ENCODE measurements at regions of chr12 and their contacts with region 1.

Region 1: GRCh38 chr12:54526812-54527630 is 22.4 kb upstream of the PDE1B start:
- DNase-seq: peak; percentile 78 to 93
- H3K4me3 ChIP-seq: no peak overlapping the region
- H3K27ac ChIP-seq: no peak overlapping the region
- H3K4me1 ChIP-seq: peaks cover 0 to 16% (median 5%) of the 10 kb centered on the region in 4 experiments; a peak in 4 of 7 replicates
- H3K27me3 ChIP-seq: peaks cover 0 to 2% (median 2%) of the 10 kb centered on the region in 4 experiments; a peak in 4 of 7 replicates
- CTCF ChIP-seq: peak; percentile 61 to 95 (median 94)
- EP300 ChIP-seq: no peak
- POLR2A ChIP-seq: no peak
- RAD21 ChIP-seq: peak; percentile 98 to 99

Region 2: DNA sequence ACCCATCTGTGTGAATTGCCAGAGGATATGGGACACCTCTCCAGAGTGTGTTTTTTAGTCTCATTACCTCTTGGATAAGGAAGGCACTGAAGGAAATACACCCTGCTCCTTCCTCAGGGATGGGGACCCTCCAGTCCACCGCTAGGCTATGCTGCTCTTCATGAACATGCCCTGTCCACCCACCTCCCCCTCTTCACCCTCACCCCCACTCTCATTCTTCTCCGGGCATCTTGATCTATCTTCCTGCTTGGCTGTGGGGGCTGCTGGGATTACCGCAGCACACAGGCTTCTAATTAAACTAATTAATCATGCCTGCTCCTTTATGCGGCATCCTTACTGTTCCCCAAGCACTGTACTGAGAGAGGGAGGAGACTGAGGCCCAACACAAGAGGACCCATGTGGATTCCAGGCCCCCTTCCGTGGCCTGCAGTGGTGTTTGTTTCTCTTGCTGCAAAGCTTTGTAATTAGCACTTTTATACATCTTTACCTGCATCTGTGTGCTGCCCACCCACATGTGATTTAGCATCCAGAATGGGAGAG is 14.8 kb after region 1 on chr12:
- CTCF ChIA-PET with region 1: interaction called, 76 read pairs
- POLR2A ChIA-PET with region 1: interaction called, 3 read pairs
- DNase-seq: no peak
- H3K4me3 ChIP-seq: no peak overlapping the region
- H3K27ac ChIP-seq: no peak overlapping the region
- H3K4me1 ChIP-seq: peaks cover 0 to 9% (median 3%) of the 10 kb centered on the region in 4 experiments; a peak in 4 of 7 replicates
- H3K27me3 ChIP-seq: peaks cover 0 to 7% (median 3%) of the 10 kb centered on the region in 4 experiments; a peak in 4 of 7 replicates
- CTCF ChIP-seq: no peak
- EP300 ChIP-seq: no peak
- POLR2A ChIP-seq: no peak
- RAD21 ChIP-seq: no peak

Region 3: DNA sequence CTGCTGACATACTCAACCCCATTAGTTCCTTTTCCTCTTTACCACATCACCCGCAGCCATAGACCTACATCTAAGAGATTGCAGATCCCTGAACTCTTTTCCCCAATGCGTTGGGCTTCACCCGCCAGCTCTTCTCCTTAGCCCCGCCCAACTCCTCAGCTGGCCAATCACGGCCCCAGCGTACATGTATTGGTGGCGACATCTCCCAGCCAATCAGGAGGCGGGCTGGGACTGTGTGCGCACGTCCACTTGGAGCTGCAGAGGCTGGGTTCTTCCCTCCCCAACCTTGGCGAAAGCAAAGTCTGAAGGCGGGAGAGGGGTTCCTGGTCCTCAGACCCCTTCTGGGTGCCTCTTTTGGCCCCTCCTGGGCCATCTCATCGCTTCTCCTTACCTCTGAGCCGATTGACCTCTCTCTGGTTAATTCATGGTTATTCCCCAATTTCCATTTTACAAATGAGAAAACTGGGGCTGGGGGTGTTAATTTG is 33.4 kb after region 1 on chr12:
- CTCF ChIA-PET with region 1: interaction called, 53 read pairs
- POLR2A ChIA-PET with region 1: no interaction called
- DNase-seq: peak; percentile 61 to 88
- H3K4me3 ChIP-seq: peak overlapping the region; percentile 19 to 57 (median 26); a peak in 7 of 8 replicates
- H3K27ac ChIP-seq: no peak overlapping the region
- H3K4me1 ChIP-seq: peaks cover 0 to 7% (median 5%) of the 10 kb centered on the region in 4 experiments; a peak in 5 of 7 replicates
- H3K27me3 ChIP-seq: peaks cover 19 to 69% (median 54%) of the 10 kb centered on the region in 4 experiments
- CTCF ChIP-seq: no peak
- EP300 ChIP-seq: no peak
- POLR2A ChIP-seq: 0 out of 3 replicates have a peak, but pooled peaks of 1 of the 2 experiments have one; percentile 12
- RAD21 ChIP-seq: no peak

Region 4: DNA sequence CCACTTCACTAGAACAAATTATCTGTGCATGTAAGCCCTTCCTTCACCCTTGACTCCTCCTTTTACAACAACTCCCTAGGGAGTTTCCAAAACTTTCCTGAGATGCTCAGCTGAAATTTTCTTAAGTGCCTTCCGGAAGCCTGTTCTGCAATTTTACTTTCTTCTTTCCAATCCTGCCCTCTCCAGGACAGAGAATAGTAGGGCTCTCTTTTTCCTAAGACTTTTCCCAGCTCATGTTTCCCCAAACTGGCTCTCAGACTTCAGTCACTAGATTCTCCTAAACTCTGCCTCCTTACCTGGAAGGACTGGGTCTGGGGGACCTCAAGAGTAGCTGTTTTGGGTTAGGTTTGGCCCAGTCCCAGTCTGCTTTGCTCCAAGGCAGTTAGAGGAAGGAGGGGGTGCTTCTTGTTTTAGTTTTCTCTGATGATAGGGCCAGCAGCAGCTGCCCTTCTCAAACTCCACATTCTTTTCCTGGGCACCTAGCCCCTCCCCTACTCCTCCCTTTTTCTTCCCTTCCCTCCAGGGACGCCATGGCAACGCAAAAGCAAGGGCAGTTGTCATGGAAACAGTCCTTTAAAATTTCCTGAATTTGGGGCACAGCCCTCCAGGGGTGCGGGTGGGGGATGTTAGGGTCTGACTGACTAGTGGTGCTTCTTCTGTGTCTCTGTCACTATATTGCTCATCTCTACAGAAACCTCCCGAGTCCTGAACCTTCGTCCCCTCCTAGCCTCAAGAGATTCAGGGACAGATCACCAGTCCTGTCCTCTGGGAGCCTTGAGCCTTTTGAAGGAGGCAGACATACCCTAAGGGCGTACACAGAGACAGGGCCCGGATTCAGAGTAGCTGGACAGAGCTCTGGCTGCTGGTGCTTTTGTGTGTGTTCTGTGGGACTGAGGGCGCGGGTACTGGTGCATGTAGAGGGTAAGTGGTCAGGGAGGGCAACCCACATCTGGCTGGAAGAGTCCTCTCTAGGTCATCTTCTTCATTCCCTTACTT is 44.5 kb after region 1 on chr12:
- CTCF ChIA-PET with region 1: interaction called, 120 read pairs
- POLR2A ChIA-PET with region 1: no interaction called
- DNase-seq: peak in 1 of 2 experiments; percentile 64
- H3K4me3 ChIP-seq: peak overlapping the region in 1 of 4 experiments; percentile 15; a peak in 1 of 8 replicates
- H3K27ac ChIP-seq: no peak overlapping the region
- H3K4me1 ChIP-seq: peaks cover 6 to 16% (median 8%) of the 10 kb centered on the region in 4 experiments; a peak in 6 of 7 replicates
- H3K27me3 ChIP-seq: peaks cover 0 to 3% (median under 1%) of the 10 kb centered on the region in 4 experiments; a peak in 3 of 7 replicates
- CTCF ChIP-seq: peak in 2 of 3 experiments; percentile 35 to 60; a peak in 3 of 4 replicates
- EP300 ChIP-seq: no peak
- POLR2A ChIP-seq: no peak
- RAD21 ChIP-seq: peak; percentile 68 to 74

Region 5: GRCh38 chr12:54588110-54588889 is 61.3 kb after region 1 on chr12 and contains the start of gene PPP1R1A:
- CTCF ChIA-PET with region 1: interaction called, 28 read pairs
- POLR2A ChIA-PET with region 1: no interaction called
- DNase-seq: peak in 1 of 2 experiments; percentile 73
- H3K4me3 ChIP-seq: peak within 1 kb of the TSS; percentile 69 to 88 (median 74)
- H3K27ac ChIP-seq: no peak within 1 kb of the TSS
- H3K4me1 ChIP-seq: peaks cover 0 to 26% (median 18%) of the 10 kb centered on the region in 4 experiments; a peak in 6 of 7 replicates
- H3K27me3 ChIP-seq: peaks cover 2 to 53% (median 41%) of the 10 kb centered on the region in 4 experiments
- CTCF ChIP-seq: no peak
- EP300 ChIP-seq: no peak
- POLR2A ChIP-seq: no peak
- RAD21 ChIP-seq: no peak
- total RNA-seq, gene PPP1R1A: 8.1 and 13.1 TPM in 2 replicates

Region 6: GRCh38 chr12:54603173-54603814 is 76.3 kb after region 1 on chr12:
- CTCF ChIA-PET with region 1: interaction called, 25 read pairs
- POLR2A ChIA-PET with region 1: no interaction called
- DNase-seq: peak in 1 of 2 experiments; percentile 72
- H3K4me3 ChIP-seq: no peak overlapping the region
- H3K27ac ChIP-seq: no peak overlapping the region
- H3K4me1 ChIP-seq: no peaks in the 10 kb centered on the region
- H3K27me3 ChIP-seq: peaks cover 0 to 8% (median 2%) of the 10 kb centered on the region in 4 experiments; a peak in 3 of 7 replicates
- CTCF ChIP-seq: peak; percentile 73 to 86 (median 82)
- EP300 ChIP-seq: no peak
- POLR2A ChIP-seq: no peak
- RAD21 ChIP-seq: peak; percentile 64 to 76

Region 7: GRCh38 chr12:54641554-54641953 is 114.5 kb after region 1 on chr12:
- CTCF ChIA-PET with region 1: no interaction called
- POLR2A ChIA-PET with region 1: no interaction called
- DNase-seq: no peak
- H3K4me3 ChIP-seq: no peak overlapping the region
- H3K27ac ChIP-seq: no peak overlapping the region
- H3K4me1 ChIP-seq: no peaks in the 10 kb centered on the region
- H3K27me3 ChIP-seq: no peaks in the 10 kb centered on the region
- CTCF ChIP-seq: no peak
- EP300 ChIP-seq: no peak
- POLR2A ChIP-seq: no peak
- RAD21 ChIP-seq: no peak

Region 8: GRCh38 chr12:54701940-54702592 is 175.0 kb after region 1 on chr12:
- CTCF ChIA-PET with region 1: no interaction called
- POLR2A ChIA-PET with region 1: no interaction called
- DNase-seq: no peak
- H3K4me3 ChIP-seq: no peak overlapping the region
- H3K27ac ChIP-seq: no peak overlapping the region
- H3K4me1 ChIP-seq: no peaks in the 10 kb centered on the region
- H3K27me3 ChIP-seq: no peaks in the 10 kb centered on the region
- CTCF ChIP-seq: peak in 2 of 3 experiments; percentile 43 to 55; a peak in 2 of 4 replicates
- EP300 ChIP-seq: no peak
- POLR2A ChIP-seq: no peak
- RAD21 ChIP-seq: peak; percentile 79